ENCODE measurements at regions of chr22 and their contacts with region 1.

Region 1: DNA sequence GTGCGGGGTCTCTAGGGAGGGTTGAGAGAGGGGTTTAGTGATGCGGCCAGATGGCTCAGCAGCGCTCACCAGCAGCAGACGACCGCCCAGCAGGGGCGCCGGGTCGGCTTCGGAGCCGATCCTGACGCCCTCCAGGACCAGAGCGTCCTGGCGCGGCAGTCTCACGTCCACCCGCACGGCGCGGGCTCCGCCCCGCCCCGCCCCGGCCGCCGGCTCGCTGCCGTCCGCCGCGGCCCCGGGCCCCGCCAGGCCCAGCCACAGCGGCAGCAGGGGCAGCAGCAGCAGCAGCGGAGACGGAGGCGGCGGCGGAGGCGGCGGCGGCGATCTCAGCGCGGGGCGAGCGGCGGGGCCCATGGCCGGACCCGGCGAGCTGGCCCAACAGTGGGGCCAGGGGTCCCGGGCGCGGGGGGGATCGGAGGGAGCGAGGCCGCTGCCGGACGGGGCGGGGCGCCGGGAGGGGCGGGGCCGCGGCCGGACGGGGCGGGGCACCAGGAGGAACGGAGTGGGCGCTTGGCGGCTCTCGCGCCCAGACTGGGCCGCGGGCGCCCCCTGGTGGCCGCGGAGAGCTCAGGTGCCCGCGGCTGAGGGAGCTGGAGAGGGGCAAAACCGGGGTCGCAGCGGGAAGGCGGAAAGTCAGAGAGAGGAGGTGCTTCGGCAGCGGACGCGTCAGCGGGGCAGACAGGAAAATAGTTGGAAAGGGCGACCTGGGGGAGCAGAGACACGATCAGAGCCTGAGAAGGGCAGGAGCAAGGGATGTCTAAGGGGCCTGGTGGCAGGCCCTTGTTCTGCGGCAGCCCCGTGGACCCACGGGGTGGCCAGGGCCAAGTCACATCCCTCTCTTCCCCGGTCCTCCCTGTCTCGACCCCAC is at the start of gene RNF215:
- DNase-seq: peak; percentile 74
- H3K4me3 ChIP-seq: peak within 1 kb of the TSS; percentile 55 to 57
- H3K27ac ChIP-seq: peak within 1 kb of the TSS; percentile 57 to 76
- H3K4me1 ChIP-seq: no peaks in the 10 kb centered on the region
- H3K27me3 ChIP-seq: no peaks in the 10 kb centered on the region
- CTCF ChIP-seq: peak; percentile 96 to 98 (median 97)
- POLR2A ChIP-seq: no peak
- total RNA-seq, gene RNF215: 18.1 to 20.0 TPM

Region 2: GRCh38 chr22:30104501-30105156 is 282.6 kb before region 1 on chr22:
- intact Hi-C with region 1: loop called (anchors 2 kb)
- DNase-seq: no peak
- H3K4me3 ChIP-seq: no peak overlapping the region
- H3K27ac ChIP-seq: no peak overlapping the region
- H3K4me1 ChIP-seq: no peaks in the 10 kb centered on the region
- H3K27me3 ChIP-seq: no peaks in the 10 kb centered on the region
- CTCF ChIP-seq: no peak
- POLR2A ChIP-seq: no peak

Region 3: GRCh38 chr22:30262917-30263741 is 124.1 kb before region 1 on chr22:
- intact Hi-C with region 1: loop called (anchors 1 kb)
- DNase-seq: peak; percentile 52
- H3K4me3 ChIP-seq: no peak overlapping the region
- H3K27ac ChIP-seq: peak overlapping the region in 1 of 2 donors; percentile 26
- H3K4me1 ChIP-seq: no peaks in the 10 kb centered on the region
- H3K27me3 ChIP-seq: no peaks in the 10 kb centered on the region
- CTCF ChIP-seq: peak; percentile 96 to 99 (median 97)
- POLR2A ChIP-seq: no peak

Region 4: DNA sequence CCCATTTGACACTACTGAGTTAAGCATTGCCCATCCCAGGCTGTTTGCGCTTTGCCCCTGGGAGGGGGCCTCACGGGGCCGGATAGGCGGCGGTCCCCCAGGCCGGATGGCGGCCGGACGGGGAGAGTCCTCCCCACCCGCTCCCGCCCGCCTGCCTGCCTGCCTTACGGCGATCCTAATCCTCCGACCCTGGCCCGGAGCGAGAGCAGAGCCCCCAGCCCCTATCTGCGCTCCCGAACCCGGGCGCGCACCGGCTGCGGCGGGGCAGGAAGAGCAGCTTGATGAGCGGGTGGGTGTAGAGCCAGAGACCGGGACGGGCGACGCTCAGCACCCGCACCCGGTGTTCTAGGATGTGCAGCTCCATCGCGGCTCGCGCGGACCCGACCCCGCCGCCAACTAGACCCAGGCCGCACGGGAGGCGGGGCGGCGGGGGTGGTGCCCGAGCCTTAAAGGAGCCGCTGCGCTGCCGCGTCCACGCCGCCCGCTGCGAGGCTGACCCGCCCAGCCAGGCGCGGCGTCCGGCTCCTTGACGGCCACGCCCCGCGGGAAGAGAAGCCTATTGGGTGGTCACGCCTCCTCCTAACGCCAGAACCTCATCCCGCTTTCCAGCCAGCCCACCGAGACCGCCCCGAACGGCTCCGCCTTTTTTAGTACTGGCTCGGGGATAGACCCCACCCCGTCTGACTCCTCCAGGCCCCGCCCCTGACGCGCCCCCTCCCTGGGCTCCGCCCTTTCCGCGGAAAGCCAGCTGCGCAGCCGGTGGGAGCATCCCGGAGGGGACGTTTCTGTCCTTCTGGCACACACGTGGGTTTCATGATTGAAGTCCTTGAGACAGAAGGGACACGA is 97.8 kb before region 1 on chr22 and contains the start of gene CASTOR1:
- intact Hi-C with region 1: loop called (anchors 1 kb)
- DNase-seq: peak; percentile 99
- H3K4me3 ChIP-seq: peak within 1 kb of the TSS; percentile 51 to 89
- H3K27ac ChIP-seq: peak within 1 kb of the TSS; percentile 88 to 95
- H3K4me1 ChIP-seq: peaks cover 21% of the 10 kb centered on the region
- H3K27me3 ChIP-seq: no peaks in the 10 kb centered on the region
- CTCF ChIP-seq: peak in 2 of 4 experiments; percentile 15 to 30
- POLR2A ChIP-seq: peak; percentile 91
- total RNA-seq, gene CASTOR1: 27.2 to 33.2 TPM

Region 5: GRCh38 chr22:30356449-30357235 is 30.6 kb before region 1 on chr22 and contains the starts of genes CCDC157 and SF3A1:
- intact Hi-C with region 1: loop called (anchors 2 kb)
- DNase-seq: peak; percentile 85
- H3K4me3 ChIP-seq: peak within 1 kb of the TSS; percentile 58 to 68
- H3K27ac ChIP-seq: peak within 1 kb of the TSS; percentile 93
- H3K4me1 ChIP-seq: peaks cover 10% of the 10 kb centered on the region
- H3K27me3 ChIP-seq: no peaks in the 10 kb centered on the region
- CTCF ChIP-seq: peak in 2 of 4 experiments; percentile 29
- POLR2A ChIP-seq: peak; percentile 85
- total RNA-seq, gene CCDC157: 3.5 to 28.6 TPM
- total RNA-seq, gene SF3A1: 108 to 134 TPM

Region 6: GRCh38 chr22:30485362-30485988 is 98.3 kb after region 1 on chr22:
- intact Hi-C with region 1: loop called (anchors 5 kb)
- DNase-seq: peak; percentile 53
- H3K4me3 ChIP-seq: no peak overlapping the region
- H3K27ac ChIP-seq: no peak overlapping the region
- H3K4me1 ChIP-seq: no peaks in the 10 kb centered on the region
- H3K27me3 ChIP-seq: no peaks in the 10 kb centered on the region
- CTCF ChIP-seq: peak; percentile 87 to 97 (median 92)
- POLR2A ChIP-seq: no peak

Measured in prostate gland (tissue), 2 donors.